Panc1 (cell line): ENCODE measurements at regions of chr4 and their contacts with region 1.

Region 1: GRCh38 chr4:57147335-57148060 is 37.3 kb upstream of the IGFBP7 start:
- DNase-seq: no peak
- ATAC-seq: no peak
- H3K4me3 ChIP-seq: no peak overlapping the region
- H3K27ac ChIP-seq: no peak overlapping the region
- H3K4me1 ChIP-seq: no peaks in the 10 kb centered on the region
- H3K27me3 ChIP-seq: no peaks in the 10 kb centered on the region
- CTCF ChIP-seq: no peak

Region 2: DNA sequence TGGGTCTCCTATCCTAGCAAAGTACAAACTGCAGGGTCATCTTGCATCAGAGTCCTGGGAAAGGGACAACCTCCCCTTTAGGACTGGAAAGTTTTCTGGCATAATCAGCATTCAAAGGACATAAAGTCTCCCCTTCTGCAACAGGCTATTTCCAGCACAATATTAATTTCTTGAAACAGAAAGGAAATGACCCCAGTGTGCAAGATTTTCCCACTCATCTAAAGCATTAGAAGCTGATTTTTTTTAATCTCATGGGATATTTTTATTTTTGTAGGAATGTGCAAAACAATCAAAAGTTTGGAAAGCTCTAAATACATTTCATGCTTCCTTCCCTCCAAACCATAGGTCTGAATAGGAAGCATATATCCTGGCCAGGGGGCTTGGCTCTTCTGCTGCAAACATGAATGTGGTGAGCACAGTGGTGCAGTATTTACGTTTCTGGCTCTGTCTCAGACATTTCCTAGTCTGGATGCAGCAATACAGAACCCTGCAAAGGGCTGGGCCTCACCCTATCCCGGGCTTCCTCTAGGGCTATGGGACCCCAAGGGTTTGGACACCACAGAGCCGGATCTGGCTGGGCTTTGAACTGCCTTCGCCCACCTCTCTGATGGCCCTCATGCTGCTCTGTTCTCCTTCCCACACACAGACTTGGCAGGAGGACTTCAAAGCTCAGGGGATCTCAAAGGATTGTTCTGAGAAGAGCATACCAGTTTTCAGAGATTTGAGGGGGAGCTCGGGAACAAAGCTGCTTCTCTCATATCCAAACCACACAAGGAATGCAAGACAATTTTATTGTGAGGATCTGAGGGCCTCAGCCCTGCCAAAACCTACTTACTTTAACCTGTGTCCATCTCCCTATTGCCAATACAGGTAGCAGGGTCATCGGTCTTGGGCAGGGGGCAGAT is 103.9 kb before region 1 on chr4:
- CTCF ChIA-PET with region 1: no interaction called
- POLR2A ChIA-PET with region 1: no interaction called
- in situ Hi-C with region 1: no loop called
- intact Hi-C with region 1: loop called (anchors 10 kb)
- DNase-seq: no peak
- ATAC-seq: no peak
- H3K4me3 ChIP-seq: no peak overlapping the region
- H3K27ac ChIP-seq: no peak overlapping the region
- H3K4me1 ChIP-seq: no peaks in the 10 kb centered on the region
- H3K27me3 ChIP-seq: no peaks in the 10 kb centered on the region
- CTCF ChIP-seq: no peak

Region 3: GRCh38 chr4:57265831-57266582 is 118.5 kb after region 1 on chr4:
- CTCF ChIA-PET with region 1: no interaction called
- POLR2A ChIA-PET with region 1: no interaction called
- in situ Hi-C with region 1: no loop called
- intact Hi-C with region 1: no loop called
- DNase-seq: no peak
- ATAC-seq: no peak
- H3K4me3 ChIP-seq: no peak overlapping the region
- H3K27ac ChIP-seq: no peak overlapping the region
- H3K4me1 ChIP-seq: no peaks in the 10 kb centered on the region
- H3K27me3 ChIP-seq: no peaks in the 10 kb centered on the region
- CTCF ChIP-seq: no peak